A549 (cell line): ENCODE measurements at regions of chr16 and their contacts with region 1.

Region 1: GRCh38 chr16:89289428-89290395 is 72.2 kb downstream of the ZNF778 start:
- DNase-seq: peak; percentile 73 to 99
- ATAC-seq: peak; percentile 85 to 93
- H3K4me3 ChIP-seq: no peak overlapping the region
- H3K27ac ChIP-seq: peak overlapping the region in 1 of 2 experiments; percentile 42; a peak in 2 of 6 replicates
- H3K4me1 ChIP-seq: peaks cover 4% of the 10 kb centered on the region; the same call in 1 of the 3 replicates
- CTCF ChIP-seq: peak; percentile 82
- EP300 ChIP-seq: no peak
- POLR2A ChIP-seq: no peak
- RAD21 ChIP-seq: peak; percentile 70 to 73

Region 2: GRCh38 chr16:89246903-89247733 is 42.6 kb before region 1 on chr16:
- CTCF ChIA-PET with region 1: interaction called, 12 read pairs
- POLR2A ChIA-PET with region 1: no interaction called
- DNase-seq: peak; percentile 82 to 91
- ATAC-seq: peak; percentile 85 to 92
- H3K4me3 ChIP-seq: peak overlapping the region; percentile 53
- H3K27ac ChIP-seq: peak overlapping the region; percentile 84 to 92
- H3K4me1 ChIP-seq: no peaks in the 10 kb centered on the region
- CTCF ChIP-seq: no peak
- EP300 ChIP-seq: no peak
- POLR2A ChIP-seq: peak; percentile 55
- RAD21 ChIP-seq: no peak

Region 3: GRCh38 chr16:89268987-89269735 is 20.6 kb before region 1 on chr16:
- CTCF ChIA-PET with region 1: interaction called, 80 read pairs
- POLR2A ChIA-PET with region 1: no interaction called
- DNase-seq: no peak
- ATAC-seq: no peak
- H3K4me3 ChIP-seq: no peak overlapping the region
- H3K27ac ChIP-seq: peak overlapping the region in 1 of 2 experiments; percentile 49; a peak in 3 of 6 replicates
- H3K4me1 ChIP-seq: peaks cover 15% of the 10 kb centered on the region
- CTCF ChIP-seq: no peak
- EP300 ChIP-seq: no peak
- POLR2A ChIP-seq: no peak
- RAD21 ChIP-seq: no peak

Region 4: GRCh38 chr16:89308390-89309333 is 18.9 kb after region 1 on chr16:
- CTCF ChIA-PET with region 1: interaction called, 52 read pairs
- POLR2A ChIA-PET with region 1: interaction called, 6 read pairs
- DNase-seq: no peak
- ATAC-seq: peak in 1 of 2 experiments; percentile 48; a peak in 2 of 6 replicates
- H3K4me3 ChIP-seq: no peak overlapping the region
- H3K27ac ChIP-seq: 0 out of 6 replicates have a peak overlapping the region, but pooled peaks of 1 of the 2 experiments have one; percentile 6
- H3K4me1 ChIP-seq: peaks cover 7% of the 10 kb centered on the region; the same call in 2 of the 3 replicates
- CTCF ChIP-seq: peak; percentile 25; the same call in 2 of the 3 replicates
- EP300 ChIP-seq: no peak
- POLR2A ChIP-seq: no peak
- RAD21 ChIP-seq: peak in 1 of 2 experiments; percentile 26; a peak in 1 of 5 replicates

Region 5: DNA sequence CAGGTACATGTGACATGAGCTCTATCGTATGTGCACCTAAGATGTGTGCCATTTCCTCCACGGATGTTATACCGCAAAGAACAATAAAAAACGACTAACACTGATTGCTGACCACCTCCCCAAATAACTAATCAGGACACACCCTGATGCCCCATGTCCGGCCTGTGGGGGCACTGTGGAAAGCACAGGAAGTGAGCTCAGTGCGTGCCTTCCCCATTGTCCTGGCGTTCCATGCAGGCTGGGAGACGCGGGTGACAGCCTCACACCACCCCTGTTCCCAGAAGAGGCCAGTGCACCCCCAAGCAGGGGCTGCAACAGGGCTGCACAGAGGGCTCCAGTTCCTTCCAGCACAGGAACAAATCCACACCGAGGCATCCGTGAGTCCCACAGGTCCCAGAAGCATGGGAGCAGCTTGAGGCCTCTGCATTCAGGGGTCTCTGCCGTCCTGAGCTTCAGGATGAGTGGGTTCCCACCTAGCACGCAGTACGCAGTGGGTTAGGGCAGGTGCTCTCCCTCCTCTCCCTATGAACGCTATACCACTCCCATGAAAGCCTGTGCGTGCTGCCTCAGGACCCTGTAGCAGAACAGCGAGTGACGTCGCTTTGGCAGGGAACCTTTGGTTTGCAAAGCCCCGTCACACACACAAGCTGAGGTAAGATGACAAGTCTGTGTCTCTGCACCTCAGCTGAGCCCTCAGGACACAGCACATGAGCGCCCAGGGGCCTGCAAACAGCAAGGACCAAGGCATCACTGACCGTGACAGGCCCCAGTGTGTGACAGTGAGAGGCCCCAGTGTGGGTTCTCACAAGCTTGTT is 45.5 kb after region 1 on chr16:
- CTCF ChIA-PET with region 1: interaction called, 12 read pairs
- POLR2A ChIA-PET with region 1: no interaction called
- DNase-seq: no peak
- ATAC-seq: no peak
- H3K4me3 ChIP-seq: no peak overlapping the region
- H3K27ac ChIP-seq: no peak overlapping the region; a peak in 1 of 6 replicates
- H3K4me1 ChIP-seq: peaks cover 63% of the 10 kb centered on the region
- CTCF ChIP-seq: no peak
- EP300 ChIP-seq: no peak
- POLR2A ChIP-seq: no peak
- RAD21 ChIP-seq: no peak